PC-3 (cell line): ENCODE measurements at regions of chr3 and their contacts with region 1.

Region 1: DNA sequence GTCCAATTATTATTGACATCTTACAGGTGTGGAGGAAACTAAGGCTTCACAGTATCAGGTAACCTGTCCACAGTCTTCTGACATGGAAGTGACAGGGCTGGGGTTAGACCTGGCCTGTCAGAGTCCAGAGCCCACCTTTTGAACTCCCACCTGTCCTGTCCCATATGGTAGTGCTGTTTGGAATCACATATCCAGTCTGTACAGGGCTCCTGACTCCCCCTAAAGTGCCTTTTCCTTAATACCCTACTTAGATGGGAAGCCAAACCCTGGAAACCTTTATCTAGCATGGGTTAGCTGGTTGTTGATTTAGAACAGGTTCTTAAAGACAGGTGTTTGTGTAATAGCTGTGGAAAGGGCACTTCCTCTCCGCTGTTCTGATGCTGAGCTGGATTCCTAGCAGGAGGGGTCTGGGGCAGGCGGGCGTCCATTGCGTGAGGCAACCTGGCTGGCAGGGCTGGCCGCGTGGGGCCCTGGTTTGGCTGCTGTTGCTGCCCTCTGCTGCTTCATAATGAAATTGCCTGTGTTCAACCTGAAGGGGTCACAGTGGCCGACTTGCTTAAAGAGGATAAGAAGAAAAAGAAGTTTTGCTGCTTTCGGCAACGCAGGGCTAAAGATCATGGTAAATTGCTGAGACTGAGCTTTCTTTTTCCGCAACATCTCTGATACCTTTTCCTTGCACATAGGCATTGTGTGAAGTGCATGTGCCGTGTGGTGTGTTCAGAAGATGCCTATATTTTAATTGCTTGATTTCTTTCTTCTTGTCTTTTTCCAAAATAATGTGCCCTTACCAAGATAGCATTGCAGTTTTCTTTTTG is 136.2 kb downstream of the CHDH start:
- DNase-seq: peak; percentile 80
- ATAC-seq: peak; percentile 97
- H3K4me3 ChIP-seq: no peak overlapping the region
- H3K27ac ChIP-seq: no peak overlapping the region
- H3K4me1 ChIP-seq: no peaks in the 10 kb centered on the region
- H3K27me3 ChIP-seq: peaks cover 45% of the 10 kb centered on the region
- CTCF ChIP-seq: peak; percentile 90

Region 2: GRCh38 chr3:53219895-53220483 is 490.1 kb before region 1 on chr3:
- CTCF ChIA-PET with region 1: no interaction called
- POLR2A ChIA-PET with region 1: no interaction called
- intact Hi-C with region 1: loop called (anchors 2 kb)
- DNase-seq: peak; percentile 94
- ATAC-seq: peak; percentile 95
- H3K4me3 ChIP-seq: no peak overlapping the region
- H3K27ac ChIP-seq: no peak overlapping the region
- H3K4me1 ChIP-seq: no peaks in the 10 kb centered on the region
- H3K27me3 ChIP-seq: no peaks in the 10 kb centered on the region
- CTCF ChIP-seq: peak; percentile 97

Region 3: GRCh38 chr3:53375019-53375418 is 335.0 kb before region 1 on chr3:
- CTCF ChIA-PET with region 1: no interaction called
- POLR2A ChIA-PET with region 1: no interaction called
- intact Hi-C with region 1: loop called (anchors 1 kb)
- DNase-seq: peak; percentile 74
- ATAC-seq: peak; percentile 97
- H3K4me3 ChIP-seq: no peak overlapping the region
- H3K27ac ChIP-seq: no peak overlapping the region
- H3K4me1 ChIP-seq: no peaks in the 10 kb centered on the region
- H3K27me3 ChIP-seq: peaks cover 23% of the 10 kb centered on the region
- CTCF ChIP-seq: peak; percentile 90

Region 4: DNA sequence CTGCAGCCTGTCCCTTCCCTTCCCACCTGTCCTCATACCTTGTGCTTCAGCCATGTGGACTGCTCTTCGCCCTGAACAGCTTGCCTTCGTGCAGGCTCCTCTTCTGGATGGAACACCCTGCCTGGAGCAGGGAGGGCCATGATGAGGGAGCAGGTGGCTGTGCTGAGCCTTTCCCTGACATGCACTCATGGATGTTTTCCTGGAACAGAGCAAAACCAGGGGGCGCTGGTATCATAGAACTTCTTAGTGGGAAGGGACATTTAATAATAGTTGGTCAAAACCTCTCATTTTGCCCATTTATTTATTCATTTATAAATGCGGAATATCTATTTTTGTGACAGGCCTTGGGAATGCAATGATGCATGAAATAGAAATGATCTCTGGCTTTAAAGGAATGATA is 66.3 kb before region 1 on chr3:
- CTCF ChIA-PET with region 1: no interaction called
- POLR2A ChIA-PET with region 1: no interaction called
- intact Hi-C with region 1: no loop called
- DNase-seq: no peak
- ATAC-seq: no peak
- H3K4me3 ChIP-seq: no peak overlapping the region
- H3K27ac ChIP-seq: no peak overlapping the region
- H3K4me1 ChIP-seq: no peaks in the 10 kb centered on the region
- H3K27me3 ChIP-seq: peaks cover 74% of the 10 kb centered on the region
- CTCF ChIP-seq: peak; percentile 39; the same call in 1 of the 2 replicates

Region 5: DNA sequence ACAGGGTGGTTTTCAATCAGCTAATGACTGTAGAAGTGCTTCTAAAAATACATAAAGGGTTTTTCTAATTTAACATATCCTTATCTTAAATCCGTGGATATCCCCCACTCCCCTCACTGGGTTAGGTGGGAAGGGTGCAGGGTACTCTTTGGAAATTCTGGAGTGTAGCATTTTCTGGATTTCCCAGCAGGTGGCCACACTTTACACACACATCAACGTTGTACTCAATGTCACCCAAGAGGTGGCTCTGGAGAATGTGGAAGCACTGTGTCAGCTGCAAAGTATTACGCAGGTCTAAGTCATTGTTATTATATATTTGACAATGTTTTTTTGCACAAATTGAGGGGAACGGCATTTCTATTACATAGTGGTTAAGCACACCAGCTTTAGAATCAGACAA is 32.7 kb before region 1 on chr3:
- CTCF ChIA-PET with region 1: no interaction called
- POLR2A ChIA-PET with region 1: no interaction called
- intact Hi-C with region 1: loop called (anchors 2 kb)
- DNase-seq: peak; percentile 43
- ATAC-seq: peak; percentile 80
- H3K4me3 ChIP-seq: no peak overlapping the region
- H3K27ac ChIP-seq: no peak overlapping the region
- H3K4me1 ChIP-seq: no peaks in the 10 kb centered on the region
- H3K27me3 ChIP-seq: peaks cover 80% of the 10 kb centered on the region
- CTCF ChIP-seq: peak; percentile 62

Region 6: DNA sequence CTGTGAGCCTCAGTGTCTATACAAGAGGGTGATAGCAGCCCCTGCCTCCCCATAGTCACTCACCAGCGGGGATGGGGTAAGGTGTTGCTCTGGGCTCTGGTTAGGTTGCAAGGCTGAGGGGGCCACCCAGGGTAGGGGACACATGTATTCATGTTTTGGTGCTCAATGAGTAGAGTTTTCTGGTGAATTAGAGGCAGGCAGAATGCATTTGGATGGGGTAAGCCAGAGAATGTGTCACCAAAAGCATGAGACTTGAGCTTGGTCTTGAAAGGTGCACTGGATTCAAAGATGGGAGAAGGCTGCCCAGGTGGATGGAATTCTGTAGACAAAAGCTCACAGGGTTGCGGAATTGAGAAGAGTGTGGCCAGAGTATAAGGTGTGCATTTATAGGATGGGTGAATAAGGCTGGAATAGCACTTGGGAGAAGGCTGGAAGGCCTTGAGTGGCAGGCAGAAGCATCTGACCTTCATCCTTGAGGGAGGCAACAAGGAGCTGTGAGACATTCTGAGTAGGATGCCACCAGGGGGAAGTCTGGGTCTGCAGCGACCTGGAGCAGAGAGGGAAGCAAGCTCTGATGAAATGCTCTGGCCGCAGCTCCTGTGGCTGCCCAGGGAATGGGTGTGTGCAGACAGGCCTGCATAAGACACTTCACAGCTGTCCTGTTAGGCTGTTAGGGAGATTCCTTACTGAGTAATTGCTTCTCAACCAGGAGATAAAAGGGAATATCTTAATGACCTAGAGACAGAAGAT is 13.5 kb before region 1 on chr3:
- CTCF ChIA-PET with region 1: no interaction called
- POLR2A ChIA-PET with region 1: no interaction called
- intact Hi-C with region 1: loop called (anchors 1 kb)
- DNase-seq: no peak
- ATAC-seq: peak; percentile 35; the same call in 1 of the 2 replicates
- H3K4me3 ChIP-seq: no peak overlapping the region
- H3K27ac ChIP-seq: no peak overlapping the region
- H3K4me1 ChIP-seq: no peaks in the 10 kb centered on the region
- H3K27me3 ChIP-seq: peaks cover 84% of the 10 kb centered on the region
- CTCF ChIP-seq: no peak

Region 7: DNA sequence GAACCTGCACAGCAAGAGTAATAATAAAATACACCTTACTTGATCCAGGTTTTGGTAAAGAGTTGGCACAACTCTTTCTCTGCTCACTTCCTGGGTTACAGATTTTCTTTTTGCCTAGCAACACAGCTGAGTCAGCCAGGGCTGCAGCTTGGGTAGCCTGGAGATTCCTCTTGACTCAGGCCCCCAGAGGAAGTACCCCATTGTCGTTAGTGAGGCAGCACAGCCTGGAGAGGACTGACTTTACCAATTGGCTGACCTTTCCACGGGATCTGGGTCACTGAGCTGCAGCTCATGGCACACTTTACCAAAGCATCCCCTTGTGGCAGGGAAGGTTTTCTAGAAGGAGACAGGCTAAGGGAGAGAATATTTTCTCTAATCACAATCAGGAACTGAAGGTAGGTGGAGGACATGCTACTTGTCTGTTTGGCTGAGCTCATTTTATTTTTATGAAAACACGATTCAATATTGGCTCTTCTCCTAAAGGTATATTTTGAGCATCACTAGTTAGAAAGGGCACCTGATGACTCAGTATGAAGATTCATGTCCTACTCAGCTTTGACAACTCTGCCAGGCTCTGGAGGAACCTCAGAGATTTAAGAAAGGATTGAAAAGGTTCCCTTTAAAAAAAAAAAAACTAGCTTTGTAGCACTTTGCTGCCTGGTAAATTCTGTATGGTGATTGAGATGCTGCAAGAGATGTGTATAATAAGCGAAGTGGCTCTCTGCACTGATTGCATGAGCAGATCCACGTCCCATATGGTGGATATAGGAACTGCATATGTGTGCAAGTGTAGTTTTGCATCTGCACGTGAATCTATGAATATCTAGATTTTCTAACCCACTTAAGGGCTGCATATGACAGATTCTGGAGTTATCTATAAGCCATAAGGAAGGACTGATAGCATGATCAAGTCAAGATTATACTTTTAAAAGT is 11.4 kb after region 1 on chr3:
- CTCF ChIA-PET with region 1: no interaction called
- POLR2A ChIA-PET with region 1: no interaction called
- intact Hi-C with region 1: no loop called
- DNase-seq: peak; percentile 23
- ATAC-seq: peak; percentile 27; the same call in 1 of the 2 replicates
- H3K4me3 ChIP-seq: no peak overlapping the region
- H3K27ac ChIP-seq: no peak overlapping the region
- H3K4me1 ChIP-seq: no peaks in the 10 kb centered on the region
- H3K27me3 ChIP-seq: peaks cover 57% of the 10 kb centered on the region
- CTCF ChIP-seq: no peak; the same call in 1 of the 2 replicates